OCI-LY7 (cell line): ENCODE measurements at regions of chr9 and their contacts with region 1.

Region 1: GRCh38 chr9:101877439-101877838 is 139.0 kb upstream of the GRIN3A start:
- DNase-seq: no peak
- H3K4me3 ChIP-seq: no peak overlapping the region
- H3K27ac ChIP-seq: no peak overlapping the region
- H3K4me1 ChIP-seq: no peaks in the 10 kb centered on the region
- CTCF ChIP-seq: no peak

Region 2: GRCh38 chr9:101691657-101692056 is 185.8 kb before region 1 on chr9:
- CTCF ChIA-PET with region 1: no interaction called
- POLR2A ChIA-PET with region 1: no interaction called
- intact Hi-C with region 1: no loop called
- DNase-seq: no peak
- H3K4me3 ChIP-seq: no peak overlapping the region
- H3K27ac ChIP-seq: no peak overlapping the region
- H3K4me1 ChIP-seq: no peaks in the 10 kb centered on the region
- CTCF ChIP-seq: no peak

Region 3: GRCh38 chr9:101860920-101861319 is 16.5 kb before region 1 on chr9:
- CTCF ChIA-PET with region 1: no interaction called
- POLR2A ChIA-PET with region 1: no interaction called
- intact Hi-C with region 1: no loop called
- DNase-seq: no peak
- H3K4me3 ChIP-seq: no peak overlapping the region
- H3K27ac ChIP-seq: no peak overlapping the region
- H3K4me1 ChIP-seq: no peaks in the 10 kb centered on the region
- CTCF ChIP-seq: no peak

Region 4: DNA sequence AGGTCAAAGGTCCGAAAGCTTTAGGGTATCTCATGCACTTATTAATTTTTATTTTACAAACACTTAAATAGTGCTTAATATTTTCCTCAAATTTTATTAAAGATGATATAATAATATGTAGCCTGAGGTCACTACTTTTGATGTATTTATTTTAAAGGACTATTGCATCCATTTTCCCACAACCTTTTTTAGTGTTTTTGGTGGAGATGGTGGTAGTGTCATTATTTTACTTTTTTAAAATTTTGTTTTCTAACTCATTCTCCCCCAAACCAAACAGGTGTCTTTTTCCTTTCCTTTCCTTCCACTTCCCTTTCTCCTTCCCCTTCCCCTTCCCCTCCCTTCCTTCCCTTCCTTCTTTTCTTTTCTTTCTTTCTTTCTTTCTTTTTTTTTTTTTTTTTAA is 1446.3 kb after region 1 on chr9:
- CTCF ChIA-PET with region 1: no interaction called
- POLR2A ChIA-PET with region 1: interaction called, 10 read pairs
- intact Hi-C with region 1: no loop called
- DNase-seq: no peak
- H3K4me3 ChIP-seq: no peak overlapping the region
- H3K27ac ChIP-seq: no peak overlapping the region
- H3K4me1 ChIP-seq: no peaks in the 10 kb centered on the region
- CTCF ChIP-seq: no peak